ENCODE measurements at regions of chr7 and their contacts with region 1.

Region 1: DNA sequence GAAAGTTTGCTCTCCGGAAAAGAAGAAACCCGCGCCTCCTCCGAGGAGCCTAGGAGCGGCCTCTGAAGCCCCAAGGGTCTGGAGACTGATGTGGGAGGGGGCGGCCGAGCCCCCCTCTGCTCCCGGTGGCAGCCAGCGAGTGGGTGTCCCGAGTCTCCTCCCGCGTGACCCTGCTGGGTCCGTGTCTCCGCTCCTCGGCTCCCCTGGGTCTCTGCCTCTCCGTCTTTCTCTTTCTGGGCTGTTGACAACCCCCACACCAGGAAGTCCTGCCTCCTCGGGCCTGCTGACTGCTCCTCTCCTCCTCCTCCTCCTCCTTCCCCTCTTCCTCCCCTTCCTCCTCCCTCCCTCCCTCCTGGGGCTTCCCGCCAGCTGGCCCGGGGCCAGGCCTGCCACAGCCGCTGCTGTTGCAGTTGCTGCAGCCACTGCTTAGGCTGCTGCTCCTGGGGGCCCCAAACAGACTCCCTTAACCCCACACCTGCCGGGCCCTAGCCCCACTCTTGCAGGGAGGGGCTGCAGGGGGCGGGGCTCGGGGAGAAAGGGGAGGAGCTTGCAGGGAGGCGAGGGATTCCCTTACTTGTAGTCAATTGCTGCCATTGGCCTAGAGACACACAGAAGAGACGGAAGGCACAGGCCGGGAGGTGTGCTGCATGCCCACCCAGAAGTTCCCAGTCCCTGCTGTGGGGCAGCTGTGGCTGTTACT is at the start of gene TSC22D4:
- DNase-seq: peak; percentile 97
- ATAC-seq: peak; percentile 81
- H3K4me3 Mint-ChIP-seq: peak within 1 kb of the TSS; percentile 95
- H3K27ac Mint-ChIP-seq: peak within 1 kb of the TSS; percentile 90
- H3K4me1 Mint-ChIP-seq: peaks cover 38% of the 10 kb centered on the region
- H3K27me3 Mint-ChIP-seq: no peaks in the 10 kb centered on the region
- total RNA-seq, gene TSC22D4: 128 to 144 TPM

Region 2: DNA sequence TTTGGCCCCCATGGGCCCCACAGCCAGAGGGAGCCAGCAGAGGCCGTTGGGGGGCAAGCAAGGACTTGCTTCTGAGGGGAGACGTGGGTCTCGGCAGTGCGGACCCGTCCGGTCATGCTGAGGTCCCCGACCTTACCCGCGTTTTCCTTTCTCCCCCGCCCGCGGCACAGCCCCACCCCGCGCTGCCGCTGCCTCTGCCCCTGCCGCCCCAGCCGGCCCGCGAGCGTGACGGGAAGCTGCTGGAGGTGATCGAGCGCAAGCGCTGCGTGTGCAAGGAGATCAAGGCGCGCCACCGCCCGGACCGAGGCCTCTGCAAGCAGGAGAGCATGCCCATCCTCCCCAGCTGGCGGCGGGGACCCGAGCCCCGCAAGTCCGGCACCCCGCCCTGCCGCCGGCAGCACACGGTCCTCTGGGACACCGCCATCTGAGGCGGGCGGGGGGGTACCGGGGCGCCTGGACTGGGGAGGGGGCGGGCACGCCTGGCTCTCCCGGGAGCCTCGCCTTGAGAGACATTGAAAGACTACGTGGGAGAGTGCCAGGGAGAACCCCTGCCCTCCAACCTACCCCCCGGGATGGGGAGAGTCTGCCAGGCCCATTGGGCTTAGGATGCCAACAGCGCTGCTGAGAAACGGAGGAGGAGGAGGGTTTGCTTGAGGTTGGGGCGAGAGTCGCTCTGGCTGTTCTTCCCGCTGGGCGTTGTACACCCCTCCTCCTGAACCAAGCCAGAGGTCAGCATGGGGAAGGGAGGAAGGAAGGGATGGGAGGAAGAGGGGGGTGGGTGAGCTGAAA is 14.6 kb after region 1 on chr7:
- CTCF ChIA-PET with region 1: interaction called, 41 read pairs
- DNase-seq: peak; percentile 72
- ATAC-seq: peak; percentile 87
- H3K4me3 Mint-ChIP-seq: peak overlapping the region; percentile 48
- H3K27ac Mint-ChIP-seq: no peak overlapping the region
- H3K4me1 Mint-ChIP-seq: peaks cover 7% of the 10 kb centered on the region
- H3K27me3 Mint-ChIP-seq: peaks cover 14% of the 10 kb centered on the region

Region 3: DNA sequence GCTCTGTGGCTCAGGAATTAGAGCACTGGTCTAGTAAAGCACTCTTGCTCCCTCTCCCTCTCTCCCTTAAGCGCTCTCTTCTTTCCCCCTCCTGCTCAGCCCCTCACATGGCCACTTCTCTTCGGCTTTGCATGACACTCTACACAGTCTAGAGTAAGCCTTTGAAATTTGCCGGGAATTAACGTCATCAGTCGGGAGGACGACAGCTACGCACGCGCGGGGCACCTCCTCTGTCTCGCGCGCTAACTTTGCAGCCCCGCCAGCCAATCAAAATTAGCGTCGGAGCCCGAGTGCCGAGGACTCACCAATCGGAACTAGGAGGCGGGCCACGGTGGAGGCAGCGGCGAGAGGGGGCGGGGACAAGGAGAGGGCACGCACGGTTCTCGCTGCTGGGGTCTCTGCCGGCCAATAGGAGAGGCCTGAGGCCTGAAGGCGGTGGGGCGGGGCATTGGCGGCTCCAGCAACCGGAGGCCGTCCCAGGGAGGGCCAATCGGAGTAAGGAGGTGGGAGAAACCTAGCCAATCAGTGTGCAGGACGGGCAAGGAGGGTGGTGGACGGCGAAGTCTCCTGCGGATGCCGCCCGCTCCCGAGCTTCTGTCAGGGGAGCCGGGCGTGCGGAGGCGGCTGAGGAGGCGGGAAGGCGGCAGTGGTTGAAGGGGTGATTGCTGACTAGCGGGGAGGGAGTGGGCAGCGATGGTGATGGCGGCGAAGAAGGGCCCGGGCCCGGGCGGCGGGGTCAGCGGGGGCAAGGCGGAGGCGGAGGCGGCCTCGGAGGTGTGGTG is 59.7 kb after region 1 on chr7 and contains the start of gene AGFG2:
- CTCF ChIA-PET with region 1: interaction called, 25 read pairs
- DNase-seq: peak; percentile 100
- ATAC-seq: peak; percentile 95
- H3K4me3 Mint-ChIP-seq: peak within 1 kb of the TSS; percentile 99
- H3K27ac Mint-ChIP-seq: peak within 1 kb of the TSS; percentile 91
- H3K4me1 Mint-ChIP-seq: peaks cover 45% of the 10 kb centered on the region
- H3K27me3 Mint-ChIP-seq: no peaks in the 10 kb centered on the region
- total RNA-seq, gene AGFG2: 61.4 to 82.5 TPM

Region 4: DNA sequence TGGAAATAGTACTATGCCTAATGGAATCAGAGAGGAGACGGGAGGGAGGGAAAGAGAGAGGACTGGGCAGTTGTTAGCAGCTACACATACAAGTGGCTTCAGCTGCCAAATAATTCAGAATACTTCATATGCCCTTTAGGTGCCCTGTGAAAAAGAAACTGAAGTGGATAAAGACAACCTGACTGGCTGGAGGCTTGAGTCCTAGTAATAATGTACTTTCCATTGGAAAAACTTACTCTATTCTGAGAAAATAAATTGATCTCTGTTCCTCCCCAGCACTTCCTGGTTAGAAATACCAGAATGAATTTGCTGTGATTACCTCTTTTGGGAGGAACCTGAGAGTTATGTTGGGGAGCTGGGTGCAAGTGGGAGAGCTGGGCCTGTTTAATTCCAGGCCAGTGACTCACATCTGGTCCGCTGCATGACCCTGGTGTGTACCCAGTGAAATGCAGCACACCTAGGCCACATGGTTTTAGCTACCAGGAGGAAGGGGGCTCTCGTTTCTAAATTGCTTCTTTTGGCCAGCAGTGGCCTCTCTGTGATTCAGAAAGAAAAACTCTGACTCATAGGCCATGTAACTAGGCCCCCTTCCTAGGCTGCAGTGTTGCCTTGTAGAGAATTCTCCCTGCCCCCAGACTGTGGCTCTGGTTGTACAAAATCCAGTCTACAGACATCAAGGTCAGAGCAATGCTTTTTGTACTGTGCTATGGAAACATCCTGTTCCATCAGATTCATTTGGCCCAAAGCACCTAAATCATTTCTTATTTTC is 66.4 kb after region 1 on chr7:
- CTCF ChIA-PET with region 1: interaction called, 25 read pairs
- DNase-seq: peak; percentile 81
- ATAC-seq: peak; percentile 67
- H3K4me3 Mint-ChIP-seq: peak overlapping the region; percentile 99
- H3K27ac Mint-ChIP-seq: peak overlapping the region; percentile 95
- H3K4me1 Mint-ChIP-seq: peaks cover 97% of the 10 kb centered on the region
- H3K27me3 Mint-ChIP-seq: no peaks in the 10 kb centered on the region

Measured in activated CD8-positive, alpha-beta memory T cell treated with anti-CD3 and anti-CD28 coated beads, Interleukin-2, amount 10 ng/mL, durations not matched to agents 7 days and 5 days (primary cell).